ENCODE measurements at regions of chr22 and their contacts with region 1.

Region 1: DNA sequence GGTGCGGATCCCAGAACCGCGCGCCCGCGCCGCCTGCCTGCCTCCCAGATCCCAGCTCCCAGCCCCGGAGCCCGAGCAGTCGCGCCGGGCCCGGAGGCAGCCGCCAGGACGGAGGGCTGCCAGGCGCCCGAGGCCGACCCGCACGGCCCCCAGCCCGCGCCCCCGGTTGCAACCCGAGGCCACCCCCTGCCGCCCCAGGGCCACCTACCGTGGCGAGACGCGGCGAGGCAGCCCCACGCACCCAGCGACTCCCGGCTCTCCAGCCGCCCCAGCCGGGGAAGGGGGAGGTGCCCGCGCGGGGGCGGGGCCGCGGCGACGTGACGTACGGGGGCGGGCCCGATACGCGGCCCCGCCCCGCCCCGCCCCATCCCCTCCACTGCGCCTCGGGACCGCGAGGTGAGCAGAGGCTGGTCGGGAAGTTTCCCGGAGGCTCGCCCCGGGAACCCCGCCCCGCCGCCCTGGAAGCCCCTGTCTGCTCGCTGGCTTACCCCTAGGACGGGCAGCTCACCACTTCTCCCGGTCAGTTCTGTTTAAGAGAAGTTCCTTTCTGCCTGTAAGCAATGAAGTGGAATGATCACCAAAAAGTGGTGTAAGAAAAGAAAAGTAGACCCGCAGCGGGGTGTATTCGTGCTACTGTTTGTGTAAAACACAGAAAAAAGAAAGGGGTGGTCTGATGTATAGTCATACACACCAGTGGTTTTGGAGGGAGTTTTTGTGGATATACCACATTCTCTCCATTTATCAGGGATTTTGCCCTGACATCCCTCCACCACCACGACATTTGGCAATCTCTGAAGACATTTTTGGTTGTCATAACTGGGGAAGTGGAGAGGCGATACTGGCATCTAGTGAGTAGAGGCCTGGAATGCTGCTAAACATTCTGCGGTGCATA is at the start of gene TPST2:
- DNase-seq: peak; percentile 38
- ATAC-seq: peak; percentile 84
- H3K4me3 ChIP-seq: peak within 1 kb of the TSS; percentile 83 to 99 (median 87)
- H3K27ac ChIP-seq: peak within 1 kb of the TSS; percentile 67
- H3K4me1 ChIP-seq: peaks cover 26% of the 10 kb centered on the region
- H3K27me3 ChIP-seq: no peaks in the 10 kb centered on the region; a peak in 1 of 5 replicates
- CTCF ChIP-seq: no peak
- EP300 ChIP-seq: no peak
- POLR2A ChIP-seq: peak in 1 of 2 experiments; percentile 77; a peak in 2 of 4 replicates
- RAD21 ChIP-seq: no peak
- total RNA-seq, gene TPST2: 9.2 and 15.2 TPM in 2 replicates

Region 2: DNA sequence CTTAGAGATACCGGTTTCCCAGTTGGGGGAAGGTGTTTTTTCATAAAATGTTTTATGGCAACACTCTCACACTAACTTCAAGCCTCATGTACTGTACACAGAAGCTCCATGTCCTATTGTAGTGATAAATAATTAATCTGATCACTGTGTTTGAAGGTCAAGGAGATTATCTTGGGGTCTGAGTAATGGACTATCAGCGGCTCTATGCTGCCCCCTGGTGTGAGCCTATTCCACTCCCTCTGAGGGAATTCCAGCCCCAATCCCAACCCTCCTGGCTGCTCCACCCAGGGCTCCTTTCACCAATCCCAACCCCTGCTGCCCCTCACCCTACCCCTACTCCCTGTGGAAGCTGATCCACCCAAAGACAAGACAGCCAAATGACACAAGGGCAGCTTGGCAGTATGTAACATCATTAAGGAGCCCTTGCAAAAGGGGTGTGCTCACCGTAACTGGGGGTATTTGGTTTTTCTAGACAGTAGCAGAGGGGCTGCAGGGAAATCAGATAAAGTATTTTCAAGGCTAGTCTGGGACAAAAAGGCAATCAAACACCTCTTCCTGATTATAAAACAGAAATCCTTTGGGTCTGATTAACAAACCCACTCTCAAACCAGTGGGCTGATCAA is 128.8 kb before region 1 on chr22:
- CTCF ChIA-PET with region 1: no interaction called
- POLR2A ChIA-PET with region 1: no interaction called
- in situ Hi-C with region 1: no loop called
- intact Hi-C with region 1: no loop called
- DNase-seq: peak; percentile 24
- ATAC-seq: peak; percentile 89
- H3K4me3 ChIP-seq: no peak overlapping the region
- H3K27ac ChIP-seq: no peak overlapping the region
- H3K4me1 ChIP-seq: peaks cover 16% of the 10 kb centered on the region
- H3K27me3 ChIP-seq: no peaks in the 10 kb centered on the region
- CTCF ChIP-seq: peak; percentile 73
- EP300 ChIP-seq: no peak
- POLR2A ChIP-seq: no peak
- RAD21 ChIP-seq: 0 out of 2 replicates have a peak, but pooled peaks have one; percentile 15

Region 3: DNA sequence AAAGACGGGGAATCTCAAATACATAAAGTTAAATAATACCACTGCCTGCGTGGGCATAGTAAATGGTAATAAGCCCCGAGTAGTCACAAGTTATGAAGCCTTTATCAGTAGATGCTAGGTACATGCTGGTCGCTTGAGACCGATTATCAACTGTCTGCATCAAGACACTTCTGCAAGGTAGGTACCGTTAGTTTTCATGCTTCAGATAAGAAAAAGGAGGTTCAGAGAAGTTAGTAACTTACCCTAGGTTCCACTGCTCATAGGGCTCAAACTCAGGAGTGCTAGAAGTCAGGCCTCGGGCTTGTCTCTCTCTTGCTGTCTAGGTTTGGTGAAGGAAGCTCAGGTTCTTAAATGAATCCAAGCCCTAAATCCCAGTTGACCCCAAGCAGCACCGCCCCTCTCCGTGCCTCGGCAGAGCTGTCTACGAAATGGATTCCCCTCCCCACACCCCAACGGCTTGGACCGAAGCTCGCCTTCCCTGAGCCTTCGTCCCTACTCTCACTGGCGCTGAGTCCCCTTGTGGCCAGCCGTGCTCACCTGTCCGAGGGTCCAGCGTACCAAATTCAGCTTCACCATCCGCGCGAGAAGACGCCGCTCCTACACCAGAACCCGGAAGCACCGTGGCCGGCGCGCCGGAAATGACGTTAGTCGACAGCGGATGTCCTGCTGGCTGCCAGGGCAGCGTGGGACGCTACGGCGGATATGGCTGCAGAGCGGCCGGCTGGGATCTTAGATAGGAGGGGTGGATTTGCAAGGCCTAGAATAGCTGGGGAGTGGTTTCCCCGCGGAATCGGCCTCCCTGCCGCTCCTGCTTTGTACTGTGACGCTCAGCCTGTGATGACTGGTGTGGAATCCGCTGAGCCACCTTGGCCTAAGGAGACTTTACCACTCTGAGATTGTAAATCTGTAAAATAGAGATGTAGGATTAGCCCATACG is 78.0 kb before region 1 on chr22 and contains the start of gene TFIP11:
- CTCF ChIA-PET with region 1: no interaction called
- POLR2A ChIA-PET with region 1: no interaction called
- in situ Hi-C with region 1: no loop called
- intact Hi-C with region 1: loop called (anchors 5 kb)
- DNase-seq: peak; percentile 94
- ATAC-seq: peak; percentile 99
- H3K4me3 ChIP-seq: peak within 1 kb of the TSS; percentile 85 to 99 (median 92)
- H3K27ac ChIP-seq: peak within 1 kb of the TSS; percentile 73
- H3K4me1 ChIP-seq: peaks cover 21% of the 10 kb centered on the region
- H3K27me3 ChIP-seq: no peaks in the 10 kb centered on the region; a peak in 1 of 5 replicates
- CTCF ChIP-seq: peak; percentile 75
- EP300 ChIP-seq: no peak
- POLR2A ChIP-seq: peak; percentile 75 to 84
- RAD21 ChIP-seq: peak; percentile 65
- total RNA-seq, gene TFIP11: 20.8 and 22.8 TPM in 2 replicates